Common myeloid progenitor, CD34-positive (primary cell): ENCODE measurements at regions of chr11 and their contacts with region 1.

Region 1: GRCh38 chr11:83292709-83293456 is 6.7 kb upstream of the CCDC90B start:
- DNase-seq: peak; percentile 61 to 81 (median 78)
- H3K4me3 ChIP-seq: peak overlapping the region in 3 of 7 experiments; percentile 25 to 67 (median 50)
- H3K27ac ChIP-seq: no peak overlapping the region
- H3K4me1 ChIP-seq: no peaks in the 10 kb centered on the region
- H3K27me3 ChIP-seq: no peaks in the 10 kb centered on the region

Region 2: DNA sequence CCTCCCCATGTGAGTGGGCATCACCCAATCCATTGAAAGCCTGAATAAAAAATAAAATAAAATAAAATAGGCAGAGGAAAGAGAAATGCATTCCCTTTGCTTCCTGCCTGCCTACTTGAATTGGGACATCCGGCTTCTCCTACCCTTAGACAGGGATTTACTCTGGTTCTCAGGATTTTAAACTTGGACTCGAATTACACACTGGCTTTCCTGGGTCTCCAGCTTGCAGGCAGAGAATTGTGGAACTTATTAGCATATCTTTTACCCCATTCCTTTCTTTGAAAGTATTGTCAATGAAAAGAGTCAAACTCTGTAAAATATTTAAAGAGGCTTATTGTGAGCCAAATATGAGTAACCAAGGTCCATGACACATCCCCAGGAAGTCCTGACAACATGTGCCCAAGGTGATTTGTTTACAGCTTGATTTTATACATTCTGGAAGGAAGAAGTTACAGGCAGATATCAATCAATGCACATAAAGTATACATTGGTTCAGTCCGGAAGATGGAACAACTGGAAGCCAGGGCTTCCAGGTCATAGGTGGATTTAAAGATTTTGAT is 71.7 kb after region 1 on chr11:
- CTCF ChIA-PET with region 1: no interaction called
- POLR2A ChIA-PET with region 1: no interaction called
- DNase-seq: no peak
- H3K4me3 ChIP-seq: no peak overlapping the region
- H3K27ac ChIP-seq: no peak overlapping the region
- H3K4me1 ChIP-seq: no peaks in the 10 kb centered on the region
- H3K27me3 ChIP-seq: no peaks in the 10 kb centered on the region

Region 3: DNA sequence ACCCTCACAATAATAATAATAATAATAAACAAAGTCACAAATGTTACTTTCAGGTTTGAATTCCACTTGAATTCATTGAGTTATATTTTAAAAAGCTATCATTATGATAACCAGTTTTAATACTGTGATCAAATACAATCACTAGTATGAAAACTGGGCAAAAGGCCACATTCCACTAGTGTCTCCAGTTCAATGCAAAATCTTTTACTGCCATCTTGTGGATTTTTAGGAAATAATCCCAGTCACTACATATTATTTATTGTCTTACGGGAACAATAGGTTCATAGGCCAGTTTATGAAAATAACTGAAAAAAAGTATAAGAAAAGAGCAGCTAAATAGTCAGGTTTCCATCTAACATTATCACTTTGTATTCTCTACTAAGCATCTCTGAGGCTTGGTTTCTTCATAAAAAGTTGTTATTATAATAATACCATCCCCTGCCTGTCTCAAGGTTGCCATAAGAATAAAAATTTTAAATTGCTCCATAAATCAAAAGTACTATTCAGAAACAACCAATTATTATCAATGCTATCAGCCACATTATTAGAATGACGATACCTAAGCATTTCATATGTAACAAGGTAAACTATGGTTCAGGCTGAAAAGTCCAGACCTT is 527.2 kb after region 1 on chr11:
- CTCF ChIA-PET with region 1: interaction called, 24 read pairs
- POLR2A ChIA-PET with region 1: interaction called, 4 read pairs
- DNase-seq: peak; percentile 44 to 65 (median 58)
- H3K4me3 ChIP-seq: no peak overlapping the region
- H3K27ac ChIP-seq: no peak overlapping the region
- H3K4me1 ChIP-seq: no peaks in the 10 kb centered on the region
- H3K27me3 ChIP-seq: peaks cover 0 to 2% (median 0%) of the 10 kb centered on the region in 5 experiments

Region 4: DNA sequence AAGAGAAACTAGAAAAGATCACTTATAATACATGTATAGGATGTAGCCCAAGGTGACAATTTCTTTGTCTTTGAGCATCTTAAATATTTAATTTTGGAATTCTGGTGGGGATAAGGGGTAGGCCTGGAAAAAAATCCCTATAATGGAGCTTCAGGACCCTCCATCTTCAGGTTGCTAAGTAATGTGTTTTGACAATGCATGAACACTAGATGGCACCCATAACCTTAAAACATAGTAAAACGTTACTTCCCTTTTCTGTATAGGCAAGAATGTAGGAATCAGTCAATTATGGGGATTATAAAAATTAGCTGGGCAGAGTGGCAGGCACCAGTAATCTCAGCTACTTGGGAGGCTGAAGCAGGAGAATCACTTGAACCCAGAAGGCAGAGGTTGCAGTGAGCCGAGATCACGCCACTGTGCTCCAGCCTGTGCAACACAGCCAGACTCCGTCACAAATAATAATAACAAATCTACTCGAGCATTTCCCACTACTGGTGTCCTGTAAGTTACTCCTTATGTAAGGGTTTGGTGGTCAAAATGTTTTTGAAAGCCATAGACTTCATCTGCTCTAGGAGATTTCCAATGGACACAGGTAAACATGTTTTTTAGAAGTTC is 535.2 kb after region 1 on chr11:
- CTCF ChIA-PET with region 1: interaction called, 23 read pairs
- POLR2A ChIA-PET with region 1: no interaction called
- DNase-seq: peak; percentile 44 to 69 (median 67)
- H3K4me3 ChIP-seq: no peak overlapping the region
- H3K27ac ChIP-seq: no peak overlapping the region
- H3K4me1 ChIP-seq: no peaks in the 10 kb centered on the region
- H3K27me3 ChIP-seq: peaks cover 0 to 2% (median 0%) of the 10 kb centered on the region in 5 experiments